GM12878 (cell line): ENCODE measurements at regions of chr7 and their contacts with region 1.

Region 1: DNA sequence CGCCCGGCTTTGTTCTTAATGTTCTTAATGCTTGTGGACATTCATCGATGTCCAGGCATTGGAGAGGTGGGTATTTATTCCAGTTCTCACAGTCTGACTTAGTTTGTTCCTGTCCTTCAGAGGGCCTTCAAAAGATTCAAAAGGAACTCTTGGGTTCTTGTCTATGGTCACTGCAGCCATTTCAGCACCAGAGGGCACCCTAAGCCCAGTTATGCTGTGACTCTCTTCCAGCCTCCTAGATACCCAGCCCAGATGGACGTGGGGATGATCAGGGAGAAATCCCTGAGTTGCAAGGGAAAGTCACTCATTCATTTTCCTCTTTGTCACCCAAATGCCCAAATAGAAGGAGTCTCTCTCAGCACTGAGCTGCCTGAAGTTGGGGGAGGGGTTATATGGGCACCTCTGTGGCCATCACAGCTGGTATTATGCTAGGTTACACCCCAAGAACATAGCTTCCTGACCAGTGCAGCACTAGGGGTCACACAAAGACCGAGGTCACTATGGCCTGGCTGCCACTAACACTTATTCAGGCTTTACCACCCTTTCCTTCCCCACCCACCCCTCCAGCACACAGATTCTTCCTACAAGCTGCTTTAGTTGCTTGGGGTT is 26.5 kb upstream of the CCDC126 start:
- DNase-seq: peak; percentile 60
- ATAC-seq: peak; percentile 99
- H3K4me3 ChIP-seq: no peak overlapping the region
- H3K27ac ChIP-seq: no peak overlapping the region
- H3K4me1 ChIP-seq: no peaks in the 10 kb centered on the region
- H3K27me3 ChIP-seq: no peaks in the 10 kb centered on the region
- CTCF ChIP-seq: peak; percentile 76 to 98 (median 90)
- EP300 ChIP-seq: no peak
- POLR2A ChIP-seq: no peak
- RAD21 ChIP-seq: peak; percentile 100

Region 2: DNA sequence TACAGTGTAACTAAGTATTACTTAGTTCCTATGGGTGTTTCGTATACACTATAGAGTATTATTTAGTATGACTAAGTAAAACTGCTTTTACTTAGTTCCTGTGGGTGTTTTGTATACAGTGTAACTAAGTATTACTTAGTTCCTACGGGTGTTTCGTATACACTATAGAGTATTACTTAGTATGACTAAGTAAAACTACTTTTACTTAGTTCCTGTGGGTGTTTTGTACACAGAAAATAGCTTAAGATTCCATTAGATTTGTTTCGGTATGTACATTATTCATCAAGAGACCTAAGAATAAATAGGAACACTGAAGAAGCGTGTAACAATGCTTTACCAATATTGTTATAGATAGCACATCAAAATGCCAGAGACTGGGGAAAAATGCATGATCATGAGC is 125.4 kb before region 1 on chr7:
- CTCF ChIA-PET with region 1: no interaction called
- POLR2A ChIA-PET with region 1: no interaction called
- RAD21 ChIA-PET with region 1: no interaction called
- SMC1A ChIA-PET with region 1: no interaction called
- in situ Hi-C with region 1: no loop called
- intact Hi-C with region 1: no loop called
- DNase-seq: no peak
- ATAC-seq: peak; percentile 74
- H3K4me3 ChIP-seq: no peak overlapping the region
- H3K27ac ChIP-seq: no peak overlapping the region; the same call in 1 of the 2 replicates
- H3K4me1 ChIP-seq: peaks cover 17% of the 10 kb centered on the region
- H3K27me3 ChIP-seq: no peaks in the 10 kb centered on the region
- CTCF ChIP-seq: no peak
- EP300 ChIP-seq: peak in 1 of 2 experiments; percentile 70; a peak in 1 of 4 replicates
- POLR2A ChIP-seq: no peak
- RAD21 ChIP-seq: no peak

Region 3: DNA sequence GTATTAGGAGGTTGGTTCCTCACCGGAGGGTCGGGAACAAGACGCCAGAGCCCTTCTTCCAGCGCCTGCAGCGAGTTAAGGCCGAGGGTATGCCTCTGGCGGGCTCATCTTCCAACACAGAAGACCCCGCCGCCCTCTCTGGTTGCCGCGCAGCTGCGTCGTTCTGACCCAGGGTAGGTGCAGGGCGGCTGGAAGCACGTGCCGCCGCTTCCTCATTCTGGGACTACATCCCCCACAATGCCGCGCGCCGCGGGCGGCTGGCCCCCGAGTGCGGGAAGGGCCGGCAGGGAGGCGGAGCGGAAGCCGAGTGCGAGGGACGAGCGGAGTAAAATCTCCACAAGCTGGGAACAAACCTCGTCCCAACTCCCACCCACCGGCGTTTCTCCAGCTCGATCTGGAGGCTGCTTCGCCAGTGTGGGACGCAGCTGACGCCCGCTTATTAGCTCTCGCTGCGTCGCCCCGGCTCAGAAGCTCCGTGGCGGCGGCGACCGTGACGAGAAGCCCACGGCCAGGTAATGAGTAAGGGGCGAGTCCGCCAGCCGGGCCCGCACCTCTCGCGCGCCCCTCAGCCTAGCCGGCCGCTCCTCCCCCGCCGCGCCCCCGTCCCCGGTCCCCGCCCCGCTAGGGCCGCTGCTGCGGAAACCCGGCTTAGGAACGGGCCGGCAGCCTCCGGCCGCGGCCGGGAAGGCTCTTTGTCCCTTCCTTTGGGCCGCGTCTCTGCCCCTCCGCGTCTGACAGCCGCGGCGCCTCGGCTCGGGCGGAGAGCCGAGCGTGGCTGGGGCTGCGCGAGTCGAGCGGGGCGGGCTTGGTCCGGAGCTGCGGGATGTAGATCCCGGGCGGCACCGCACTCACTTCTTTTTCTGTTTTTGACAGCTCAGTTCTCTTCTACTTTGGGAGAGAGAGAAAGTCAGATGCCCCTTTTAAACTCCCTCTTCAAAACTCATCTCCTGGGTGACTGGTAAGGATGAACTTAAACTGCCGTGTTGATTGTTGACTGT is 26.7 kb after region 1 on chr7 and contains the start of gene CCDC126:
- CTCF ChIA-PET with region 1: interaction called, 17 read pairs
- POLR2A ChIA-PET with region 1: no interaction called
- RAD21 ChIA-PET with region 1: interaction called, 9 read pairs
- SMC1A ChIA-PET with region 1: interaction called, 11 read pairs
- in situ Hi-C with region 1: no loop called
- intact Hi-C with region 1: no loop called
- DNase-seq: peak; percentile 57
- ATAC-seq: peak; percentile 77
- H3K4me3 ChIP-seq: peak within 1 kb of the TSS; percentile 76
- H3K27ac ChIP-seq: peak within 1 kb of the TSS; percentile 92
- H3K4me1 ChIP-seq: peaks cover 32% of the 10 kb centered on the region
- H3K27me3 ChIP-seq: no peaks in the 10 kb centered on the region
- CTCF ChIP-seq: no peak
- EP300 ChIP-seq: no peak
- POLR2A ChIP-seq: peak; percentile 74
- RAD21 ChIP-seq: no peak
- polyA plus RNA-seq, gene CCDC126: 34.3 to 49.9 TPM

Region 4: GRCh38 chr7:23633417-23633816 is 62.7 kb after region 1 on chr7:
- CTCF ChIA-PET with region 1: no interaction called
- POLR2A ChIA-PET with region 1: no interaction called
- RAD21 ChIA-PET with region 1: no interaction called
- SMC1A ChIA-PET with region 1: no interaction called
- in situ Hi-C with region 1: no loop called
- intact Hi-C with region 1: no loop called
- DNase-seq: no peak
- ATAC-seq: no peak
- H3K4me3 ChIP-seq: no peak overlapping the region
- H3K27ac ChIP-seq: no peak overlapping the region
- H3K4me1 ChIP-seq: no peaks in the 10 kb centered on the region
- H3K27me3 ChIP-seq: no peaks in the 10 kb centered on the region
- CTCF ChIP-seq: no peak
- EP300 ChIP-seq: no peak
- POLR2A ChIP-seq: no peak
- RAD21 ChIP-seq: no peak

Region 5: DNA sequence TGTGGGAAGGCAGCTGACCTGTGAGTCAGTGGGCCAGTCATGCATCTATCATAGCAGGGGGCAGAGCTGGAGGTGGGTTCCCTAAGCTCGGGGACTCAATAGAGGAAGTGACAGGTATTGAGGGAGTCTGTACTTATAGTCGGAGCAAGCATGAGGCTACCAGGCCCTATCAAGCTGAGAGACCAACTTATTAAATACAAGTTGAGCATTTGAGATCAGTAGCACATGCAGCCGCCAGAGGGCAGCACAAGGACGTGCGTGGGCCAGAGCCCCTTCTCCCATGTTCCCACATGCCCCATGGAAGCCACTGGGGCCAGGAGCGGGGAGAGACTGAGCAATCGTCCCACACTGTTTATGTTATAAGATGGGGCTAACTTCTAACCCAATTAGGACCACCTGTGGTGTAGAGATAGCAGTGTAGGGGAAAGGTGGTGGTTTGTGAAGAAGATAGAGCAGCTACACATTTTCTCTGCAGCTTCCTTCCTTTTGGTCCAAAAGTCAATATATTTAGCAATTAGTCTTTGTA is 126.3 kb after region 1 on chr7:
- CTCF ChIA-PET with region 1: interaction called, 73 read pairs
- POLR2A ChIA-PET with region 1: no interaction called
- RAD21 ChIA-PET with region 1: interaction called, 32 read pairs
- SMC1A ChIA-PET with region 1: interaction called, 37 read pairs
- in situ Hi-C with region 1: no loop called
- intact Hi-C with region 1: loop called (anchors 5 kb)
- DNase-seq: no peak
- ATAC-seq: peak; percentile 97
- H3K4me3 ChIP-seq: no peak overlapping the region
- H3K27ac ChIP-seq: no peak overlapping the region
- H3K4me1 ChIP-seq: no peaks in the 10 kb centered on the region
- H3K27me3 ChIP-seq: no peaks in the 10 kb centered on the region
- CTCF ChIP-seq: peak; percentile 72 to 89 (median 73)
- EP300 ChIP-seq: no peak
- POLR2A ChIP-seq: no peak
- RAD21 ChIP-seq: peak; percentile 44

Region 6: GRCh38 chr7:23717788-23718187 is 147.1 kb after region 1 on chr7:
- CTCF ChIA-PET with region 1: interaction called, 264 read pairs
- POLR2A ChIA-PET with region 1: no interaction called
- RAD21 ChIA-PET with region 1: interaction called, 129 read pairs
- SMC1A ChIA-PET with region 1: interaction called, 170 read pairs
- in situ Hi-C with region 1: no loop called
- intact Hi-C with region 1: loop called (anchors 1 kb)
- DNase-seq: no peak
- ATAC-seq: peak; percentile 57
- H3K4me3 ChIP-seq: no peak overlapping the region
- H3K27ac ChIP-seq: no peak overlapping the region
- H3K4me1 ChIP-seq: no peaks in the 10 kb centered on the region
- H3K27me3 ChIP-seq: no peaks in the 10 kb centered on the region
- CTCF ChIP-seq: no peak
- EP300 ChIP-seq: no peak
- POLR2A ChIP-seq: no peak
- RAD21 ChIP-seq: no peak

Region 7: DNA sequence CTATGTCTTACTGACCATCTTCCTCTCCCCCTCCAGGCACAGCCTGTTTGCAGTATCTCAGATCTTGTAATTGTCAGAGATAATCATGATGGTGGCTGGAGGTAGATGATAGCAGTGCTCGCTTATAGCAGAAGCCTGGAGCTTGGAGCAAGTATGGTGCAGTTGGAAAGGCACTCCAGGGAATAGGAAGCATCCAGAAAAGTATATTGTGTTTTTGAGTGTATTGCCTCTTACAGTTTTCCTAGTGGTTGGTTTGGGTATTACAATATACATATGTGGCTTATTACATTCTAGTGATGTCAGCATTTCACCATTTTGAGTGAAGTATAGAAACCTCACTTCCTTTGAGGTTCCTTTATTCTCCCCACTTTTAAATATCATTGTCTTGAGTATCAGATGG is 240.8 kb after region 1 on chr7:
- CTCF ChIA-PET with region 1: no interaction called
- POLR2A ChIA-PET with region 1: no interaction called
- RAD21 ChIA-PET with region 1: no interaction called
- SMC1A ChIA-PET with region 1: no interaction called
- in situ Hi-C with region 1: no loop called
- intact Hi-C with region 1: no loop called
- DNase-seq: no peak
- ATAC-seq: no peak
- H3K4me3 ChIP-seq: no peak overlapping the region
- H3K27ac ChIP-seq: no peak overlapping the region
- H3K4me1 ChIP-seq: no peaks in the 10 kb centered on the region
- H3K27me3 ChIP-seq: no peaks in the 10 kb centered on the region; a peak in 1 of 4 replicates
- CTCF ChIP-seq: peak in 2 of 3 experiments; percentile 6 to 28; a peak in 2 of 6 replicates
- EP300 ChIP-seq: no peak
- POLR2A ChIP-seq: no peak
- RAD21 ChIP-seq: no peak

Region 8: GRCh38 chr7:23938937-23939552 is 368.3 kb after region 1 on chr7:
- CTCF ChIA-PET with region 1: interaction called, 6 read pairs
- POLR2A ChIA-PET with region 1: no interaction called
- RAD21 ChIA-PET with region 1: interaction called, 4 read pairs
- SMC1A ChIA-PET with region 1: interaction called, 4 read pairs
- in situ Hi-C with region 1: no loop called
- intact Hi-C with region 1: loop called (anchors 2 kb)
- DNase-seq: no peak
- ATAC-seq: peak; percentile 94
- H3K4me3 ChIP-seq: no peak overlapping the region
- H3K27ac ChIP-seq: no peak overlapping the region
- H3K4me1 ChIP-seq: no peaks in the 10 kb centered on the region
- H3K27me3 ChIP-seq: no peaks in the 10 kb centered on the region
- CTCF ChIP-seq: peak; percentile 51 to 60 (median 58); a peak in 5 of 6 replicates
- EP300 ChIP-seq: no peak
- POLR2A ChIP-seq: no peak
- RAD21 ChIP-seq: peak; percentile 62

Region 9: GRCh38 chr7:24381894-24382505 is 811.3 kb after region 1 on chr7:
- CTCF ChIA-PET with region 1: interaction called, 16 read pairs
- POLR2A ChIA-PET with region 1: no interaction called
- RAD21 ChIA-PET with region 1: interaction called, 8 read pairs
- SMC1A ChIA-PET with region 1: interaction called, 7 read pairs
- in situ Hi-C with region 1: loop called (anchors 25 kb)
- intact Hi-C with region 1: loop called (anchors 5 kb)
- DNase-seq: no peak
- ATAC-seq: peak; percentile 94
- H3K4me3 ChIP-seq: no peak overlapping the region
- H3K27ac ChIP-seq: no peak overlapping the region
- H3K4me1 ChIP-seq: peaks cover 3% of the 10 kb centered on the region
- H3K27me3 ChIP-seq: no peaks in the 10 kb centered on the region
- CTCF ChIP-seq: peak; percentile 56 to 65 (median 57)
- EP300 ChIP-seq: no peak
- POLR2A ChIP-seq: no peak
- RAD21 ChIP-seq: peak; percentile 85